CD8-positive, alpha-beta memory T cell (primary cell): ENCODE measurements at regions of chr16 and their contacts with region 1.

Region 1: GRCh38 chr16:27367461-27368357 is 34.3 kb upstream of the IL21R start:
- DNase-seq: peak; percentile 79 to 96 (median 92)
- H3K4me3 ChIP-seq: peak overlapping the region; percentile 23
- H3K4me3 Mint-ChIP-seq: peak overlapping the region; percentile 51 to 80 (median 72)
- H3K27ac ChIP-seq: peak overlapping the region; percentile 77
- H3K27ac Mint-ChIP-seq: peak overlapping the region; percentile 96 to 100 (median 99)
- H3K4me1 ChIP-seq: peaks cover 65% of the 10 kb centered on the region
- H3K4me1 Mint-ChIP-seq: peaks cover 33 to 71% (median 52%) of the 10 kb centered on the region in 3 donors
- H3K27me3 ChIP-seq: no peaks in the 10 kb centered on the region
- H3K27me3 Mint-ChIP-seq: no peaks in the 10 kb centered on the region

Region 2: GRCh38 chr16:27154705-27155521 is 212.8 kb before region 1 on chr16:
- CTCF ChIA-PET with region 1: interaction called, 21 read pairs
- POLR2A ChIA-PET with region 1: no interaction called
- DNase-seq: peak; percentile 36 to 71 (median 50)
- H3K4me3 ChIP-seq: no peak overlapping the region
- H3K4me3 Mint-ChIP-seq: no peak overlapping the region
- H3K27ac ChIP-seq: no peak overlapping the region
- H3K27ac Mint-ChIP-seq: peak overlapping the region in 3 of 8 donors; percentile 2 to 60 (median 27)
- H3K4me1 ChIP-seq: peaks cover 10% of the 10 kb centered on the region
- H3K4me1 Mint-ChIP-seq: peaks cover 4 to 7% (median 5%) of the 10 kb centered on the region in 3 donors
- H3K27me3 ChIP-seq: no peaks in the 10 kb centered on the region
- H3K27me3 Mint-ChIP-seq: no peaks in the 10 kb centered on the region

Region 3: GRCh38 chr16:27169511-27170071 is 198.1 kb before region 1 on chr16:
- CTCF ChIA-PET with region 1: interaction called, 21 read pairs
- POLR2A ChIA-PET with region 1: interaction called, 9 read pairs
- DNase-seq: peak; percentile 57 to 88 (median 85)
- H3K4me3 ChIP-seq: no peak overlapping the region
- H3K4me3 Mint-ChIP-seq: peak overlapping the region; percentile 2 to 81 (median 68)
- H3K27ac ChIP-seq: no peak overlapping the region
- H3K27ac Mint-ChIP-seq: peak overlapping the region; percentile 46 to 99 (median 92)
- H3K4me1 ChIP-seq: peaks cover 66% of the 10 kb centered on the region
- H3K4me1 Mint-ChIP-seq: peaks cover 56 to 71% (median 69%) of the 10 kb centered on the region in 3 donors
- H3K27me3 ChIP-seq: no peaks in the 10 kb centered on the region
- H3K27me3 Mint-ChIP-seq: no peaks in the 10 kb centered on the region

Region 4: GRCh38 chr16:27401768-27402568 is 34.3 kb after region 1 on chr16 and contains the start of gene IL21R:
- CTCF ChIA-PET with region 1: interaction called, 10 read pairs
- POLR2A ChIA-PET with region 1: interaction called, 12 read pairs
- DNase-seq: peak; percentile 82 to 97 (median 91)
- H3K4me3 ChIP-seq: peak within 1 kb of the TSS; percentile 98
- H3K4me3 Mint-ChIP-seq: peak within 1 kb of the TSS; percentile 94 to 100 (median 99)
- H3K27ac ChIP-seq: peak within 1 kb of the TSS; percentile 92
- H3K27ac Mint-ChIP-seq: peak within 1 kb of the TSS; percentile 92 to 100 (median 100)
- H3K4me1 ChIP-seq: peaks cover 49% of the 10 kb centered on the region
- H3K4me1 Mint-ChIP-seq: peaks cover 65 to 77% (median 67%) of the 10 kb centered on the region in 3 donors
- H3K27me3 ChIP-seq: no peaks in the 10 kb centered on the region
- H3K27me3 Mint-ChIP-seq: peaks cover 0 to 13% of the 10 kb centered on the region in 2 donors
- total RNA-seq, gene IL21R: 80.5 to 84.5 TPM

Region 5: DNA sequence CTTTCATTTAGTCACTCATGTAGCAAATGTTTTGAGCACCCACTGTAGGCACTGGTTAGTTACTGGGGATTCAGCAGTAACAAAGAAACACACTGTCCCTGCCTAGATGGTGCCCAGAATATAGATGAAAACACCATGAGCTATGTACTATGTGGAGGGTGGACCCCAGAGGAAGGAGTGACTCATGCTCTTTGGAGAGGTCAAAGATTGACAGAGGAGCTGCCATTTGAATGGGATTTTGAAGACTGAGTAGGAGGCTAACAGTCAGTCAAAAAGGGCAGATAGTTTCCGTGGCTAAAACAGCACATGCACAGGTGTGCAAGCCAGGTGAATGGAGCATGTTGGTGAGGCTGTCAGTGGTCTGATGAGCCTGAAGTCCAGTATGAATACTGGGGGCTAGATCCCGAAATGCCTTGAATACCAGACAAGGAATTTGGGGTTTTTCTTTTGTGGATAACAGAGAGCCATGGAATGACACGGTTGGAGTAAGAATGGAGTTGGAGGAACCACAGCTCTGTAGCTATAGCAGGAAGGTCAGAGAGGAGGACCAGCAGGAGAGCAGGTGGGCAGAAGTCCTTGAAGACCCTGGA is 40.4 kb after region 1 on chr16:
- CTCF ChIA-PET with region 1: interaction called, 10 read pairs
- POLR2A ChIA-PET with region 1: interaction called, 12 read pairs
- DNase-seq: peak in 3 of 5 donors; percentile 27 to 64 (median 35)
- H3K4me3 ChIP-seq: peak overlapping the region; percentile 6
- H3K4me3 Mint-ChIP-seq: peak overlapping the region; percentile 71 to 100 (median 99)
- H3K27ac ChIP-seq: peak overlapping the region; percentile 2
- H3K27ac Mint-ChIP-seq: peak overlapping the region; percentile 91 to 100 (median 98)
- H3K4me1 ChIP-seq: peaks cover 70% of the 10 kb centered on the region
- H3K4me1 Mint-ChIP-seq: peaks cover 84 to 95% (median 93%) of the 10 kb centered on the region in 3 donors
- H3K27me3 ChIP-seq: no peaks in the 10 kb centered on the region
- H3K27me3 Mint-ChIP-seq: peaks cover 0 to 7% of the 10 kb centered on the region in 2 donors

Region 6: DNA sequence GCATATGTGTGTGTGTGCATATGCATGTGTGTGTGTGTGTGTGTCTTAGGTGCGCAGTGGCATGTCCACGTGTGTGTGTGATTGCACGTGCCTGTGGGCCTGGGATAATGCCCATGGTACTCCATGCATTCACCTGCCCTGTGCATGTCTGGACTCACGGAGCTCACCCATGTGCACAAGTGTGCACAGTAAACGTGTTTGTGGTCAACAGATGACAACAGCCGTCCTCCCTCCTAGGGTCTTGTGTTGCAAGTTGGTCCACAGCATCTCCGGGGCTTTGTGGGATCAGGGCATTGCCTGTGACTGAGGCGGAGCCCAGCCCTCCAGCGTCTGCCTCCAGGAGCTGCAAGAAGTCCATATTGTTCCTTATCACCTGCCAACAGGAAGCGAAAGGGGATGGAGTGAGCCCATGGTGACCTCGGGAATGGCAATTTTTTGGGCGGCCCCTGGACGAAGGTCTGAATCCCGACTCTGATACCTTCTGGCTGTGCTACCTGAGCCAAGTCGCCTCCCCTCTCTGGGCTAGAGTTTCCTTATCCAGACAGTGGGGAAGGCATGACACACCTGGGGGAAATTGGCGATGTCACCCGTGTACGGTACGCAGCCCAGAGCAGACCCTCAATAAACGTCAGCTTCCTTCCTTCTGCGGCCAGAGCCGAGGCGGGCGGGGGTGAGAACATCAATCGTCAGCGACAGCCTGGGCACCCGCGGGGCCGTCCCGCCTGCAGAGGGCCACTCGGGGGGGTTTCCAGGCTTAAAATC is 81.9 kb after region 1 on chr16:
- CTCF ChIA-PET with region 1: interaction called, 32 read pairs
- POLR2A ChIA-PET with region 1: interaction called, 9 read pairs
- DNase-seq: peak; percentile 83 to 94 (median 87)
- H3K4me3 ChIP-seq: peak overlapping the region; percentile 0
- H3K4me3 Mint-ChIP-seq: peak overlapping the region; percentile 61 to 93 (median 88)
- H3K27ac ChIP-seq: peak overlapping the region; percentile 74
- H3K27ac Mint-ChIP-seq: peak overlapping the region; percentile 97 to 100 (median 100)
- H3K4me1 ChIP-seq: peaks cover 80% of the 10 kb centered on the region
- H3K4me1 Mint-ChIP-seq: peaks cover 85 to 92% (median 88%) of the 10 kb centered on the region in 3 donors
- H3K27me3 ChIP-seq: no peaks in the 10 kb centered on the region
- H3K27me3 Mint-ChIP-seq: peaks cover 0 to 9% of the 10 kb centered on the region in 2 donors

Region 7: GRCh38 chr16:27685807-27686206 is 318.1 kb after region 1 on chr16:
- CTCF ChIA-PET with region 1: no interaction called
- POLR2A ChIA-PET with region 1: no interaction called
- DNase-seq: no peak
- H3K4me3 ChIP-seq: no peak overlapping the region
- H3K4me3 Mint-ChIP-seq: no peak overlapping the region
- H3K27ac ChIP-seq: no peak overlapping the region
- H3K27ac Mint-ChIP-seq: no peak overlapping the region
- H3K4me1 ChIP-seq: no peaks in the 10 kb centered on the region
- H3K4me1 Mint-ChIP-seq: no peaks in the 10 kb centered on the region
- H3K27me3 ChIP-seq: no peaks in the 10 kb centered on the region
- H3K27me3 Mint-ChIP-seq: no peaks in the 10 kb centered on the region